ENCODE measurements at regions of chr21 and their contacts with region 1.

Region 1: GRCh38 chr21:39313571-39314142 is at the start of gene BRWD1:
- DNase-seq: peak; percentile 70 to 87 (median 83)
- H3K4me3 ChIP-seq: peak within 1 kb of the TSS; percentile 71
- H3K4me3 Mint-ChIP-seq: peak within 1 kb of the TSS; percentile 85 to 98 (median 92)
- H3K27ac ChIP-seq: peak within 1 kb of the TSS; percentile 78
- H3K27ac Mint-ChIP-seq: peak within 1 kb of the TSS; percentile 87 to 98 (median 94)
- H3K4me1 ChIP-seq: peaks cover 19% of the 10 kb centered on the region
- H3K4me1 Mint-ChIP-seq: peaks cover 32 to 49% (median 45%) of the 10 kb centered on the region in 3 donors
- H3K27me3 ChIP-seq: no peaks in the 10 kb centered on the region
- H3K27me3 Mint-ChIP-seq: peaks cover 0 to 5% of the 10 kb centered on the region in 2 donors
- total RNA-seq, gene BRWD1: 23.5 to 25.8 TPM

Region 2: GRCh38 chr21:39183237-39184007 is 130.2 kb before region 1 on chr21 and contains the start of gene PSMG1:
- CTCF ChIA-PET with region 1: interaction called, 5 read pairs
- POLR2A ChIA-PET with region 1: interaction called, 20 read pairs
- DNase-seq: peak; percentile 91 to 95 (median 93)
- H3K4me3 ChIP-seq: peak within 1 kb of the TSS; percentile 81
- H3K4me3 Mint-ChIP-seq: peak within 1 kb of the TSS; percentile 96 to 99 (median 97)
- H3K27ac ChIP-seq: peak within 1 kb of the TSS; percentile 84
- H3K27ac Mint-ChIP-seq: peak within 1 kb of the TSS; percentile 82 to 97 (median 96)
- H3K4me1 ChIP-seq: peaks cover 24% of the 10 kb centered on the region
- H3K4me1 Mint-ChIP-seq: peaks cover 39 to 58% (median 55%) of the 10 kb centered on the region in 3 donors
- H3K27me3 ChIP-seq: no peaks in the 10 kb centered on the region
- H3K27me3 Mint-ChIP-seq: no peaks in the 10 kb centered on the region
- total RNA-seq, gene PSMG1: 102 to 105 TPM

Region 3: DNA sequence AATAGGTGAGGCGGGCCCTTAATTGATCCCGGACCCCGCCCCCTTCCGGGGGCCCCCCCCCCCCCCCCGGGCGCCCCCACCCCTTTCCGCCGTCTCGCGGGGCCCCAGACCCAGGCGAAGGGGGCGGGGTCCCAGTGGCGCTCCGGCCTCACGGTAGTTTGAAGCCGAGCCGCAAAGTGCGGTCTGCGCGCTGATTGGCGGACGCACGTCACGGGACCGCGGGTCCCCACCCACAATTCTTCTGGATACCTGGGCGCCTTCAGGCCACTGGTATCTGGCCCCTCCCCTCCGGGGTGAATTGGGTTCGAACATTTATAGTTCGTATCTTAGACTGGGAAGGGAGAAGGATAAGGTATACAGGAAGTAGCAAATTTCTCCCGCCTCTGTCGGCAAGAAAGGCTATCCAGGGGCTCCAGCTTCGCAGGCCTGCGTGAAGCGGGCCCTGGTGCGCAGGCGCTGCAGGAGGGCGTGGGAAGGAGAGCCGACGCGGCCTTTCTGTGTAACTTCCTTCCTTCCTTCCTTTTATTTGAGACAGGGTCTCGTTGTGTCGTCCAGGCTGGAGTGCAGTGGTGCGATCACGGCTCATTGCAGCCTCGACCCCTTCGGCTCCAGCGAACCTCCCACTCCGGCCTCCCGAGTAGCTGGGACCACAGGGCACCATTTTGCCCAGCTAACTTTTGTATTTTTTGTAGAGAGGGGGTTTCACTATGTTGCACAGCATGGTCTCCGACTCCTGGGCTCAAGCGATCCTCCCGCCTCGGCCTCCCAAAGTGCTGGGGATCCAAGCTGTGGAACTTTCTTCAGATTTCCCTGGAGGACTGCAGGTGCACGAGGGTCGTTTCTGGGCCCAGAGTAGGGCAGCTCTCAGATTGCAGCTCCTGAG is 35.8 kb after region 1 on chr21:
- CTCF ChIA-PET with region 1: interaction called, 30 read pairs
- POLR2A ChIA-PET with region 1: interaction called, 88 read pairs
- DNase-seq: peak; percentile 94 to 97 (median 96)
- H3K4me3 ChIP-seq: peak overlapping the region; percentile 97
- H3K4me3 Mint-ChIP-seq: peak overlapping the region; percentile 93 to 99 (median 95)
- H3K27ac ChIP-seq: peak overlapping the region; percentile 92
- H3K27ac Mint-ChIP-seq: peak overlapping the region; percentile 97 to 99 (median 98)
- H3K4me1 ChIP-seq: peaks cover 32% of the 10 kb centered on the region
- H3K4me1 Mint-ChIP-seq: peaks cover 36 to 43% (median 36%) of the 10 kb centered on the region in 3 donors
- H3K27me3 ChIP-seq: no peaks in the 10 kb centered on the region
- H3K27me3 Mint-ChIP-seq: peaks cover 3 to 6% of the 10 kb centered on the region in 2 donors

Region 4: DNA sequence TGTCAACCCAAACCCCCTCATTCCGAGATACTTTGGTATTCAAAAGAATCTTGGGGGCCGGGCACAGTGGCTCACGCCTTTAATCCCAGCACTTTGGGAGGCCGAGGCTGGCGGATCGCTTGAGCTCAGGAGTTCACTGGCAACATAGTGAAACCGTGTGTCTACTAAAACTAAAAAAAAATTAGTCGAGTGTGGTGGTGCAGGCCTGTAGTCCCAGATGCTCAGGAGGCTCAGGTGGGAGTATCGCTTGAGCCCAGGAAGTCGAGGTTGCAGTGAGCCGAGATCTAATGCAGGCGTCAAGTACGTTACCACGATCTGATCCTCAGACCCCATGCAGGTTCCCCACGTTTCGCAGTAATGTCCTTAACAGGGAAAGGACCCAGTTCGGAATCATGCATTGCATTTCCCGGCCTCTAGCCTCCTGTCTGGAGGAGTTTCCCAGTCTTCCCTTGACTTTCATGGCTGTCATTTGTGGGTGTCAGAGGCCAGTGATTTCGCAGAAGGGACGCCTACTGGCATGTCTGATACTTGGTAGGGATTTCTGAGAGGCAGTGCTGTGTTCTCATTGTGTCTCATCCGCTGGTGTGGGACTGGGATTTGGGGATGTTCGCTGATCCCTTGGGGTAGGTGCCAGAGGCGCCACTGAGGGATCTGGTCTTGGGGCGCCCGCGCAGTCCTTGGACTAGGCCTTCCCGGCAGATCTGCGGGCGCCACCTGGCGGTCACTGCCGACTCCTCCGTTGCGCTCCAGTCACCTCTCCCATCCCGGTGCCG is 74.6 kb after region 1 on chr21:
- CTCF ChIA-PET with region 1: interaction called, 11 read pairs
- POLR2A ChIA-PET with region 1: interaction called, 13 read pairs
- DNase-seq: peak; percentile 79 to 91 (median 86)
- H3K4me3 ChIP-seq: peak overlapping the region; percentile 71
- H3K4me3 Mint-ChIP-seq: peak overlapping the region; percentile 88 to 93 (median 91)
- H3K27ac ChIP-seq: peak overlapping the region; percentile 76
- H3K27ac Mint-ChIP-seq: peak overlapping the region; percentile 68 to 97 (median 94)
- H3K4me1 ChIP-seq: peaks cover 4% of the 10 kb centered on the region
- H3K4me1 Mint-ChIP-seq: peaks cover 26 to 46% (median 39%) of the 10 kb centered on the region in 3 donors
- H3K27me3 ChIP-seq: no peaks in the 10 kb centered on the region
- H3K27me3 Mint-ChIP-seq: peaks cover 0 to 2% of the 10 kb centered on the region in 2 donors